ENCODE measurements at regions of chr1 and their contacts with region 1.

Region 1: GRCh38 chr1:27102707-27103491 is 52.0 kb downstream of the SLC9A1 start:
- DNase-seq: peak; percentile 77 to 84
- H3K4me3 ChIP-seq: no peak overlapping the region
- H3K27ac ChIP-seq: no peak overlapping the region
- H3K4me1 ChIP-seq: peaks cover 0 to 28% (median 25%) of the 10 kb centered on the region in 4 donors
- H3K27me3 ChIP-seq: no peaks in the 10 kb centered on the region
- CTCF ChIP-seq: peak; percentile 95 to 99

Region 2: GRCh38 chr1:27031235-27032118 is 71.4 kb before region 1 on chr1:
- intact Hi-C with region 1: no loop called
- DNase-seq: peak; percentile 76 to 95
- H3K4me3 ChIP-seq: peak overlapping the region; percentile 36 to 52
- H3K27ac ChIP-seq: peak overlapping the region; percentile 85 to 86
- H3K4me1 ChIP-seq: peaks cover 0 to 36% (median 30%) of the 10 kb centered on the region in 4 donors
- H3K27me3 ChIP-seq: no peaks in the 10 kb centered on the region
- CTCF ChIP-seq: no peak

Region 3: GRCh38 chr1:27203946-27204345 is 101.0 kb after region 1 on chr1:
- intact Hi-C with region 1: loop called (anchors 2 kb)
- DNase-seq: no peak
- H3K4me3 ChIP-seq: no peak overlapping the region
- H3K27ac ChIP-seq: no peak overlapping the region
- H3K4me1 ChIP-seq: no peaks in the 10 kb centered on the region
- H3K27me3 ChIP-seq: peaks cover 0 to 3% of the 10 kb centered on the region in 2 donors
- CTCF ChIP-seq: no peak

Region 4: GRCh38 chr1:27284425-27285273 is 181.8 kb after region 1 on chr1:
- intact Hi-C with region 1: loop called (anchors 2 kb)
- DNase-seq: peak; percentile 82 to 94
- H3K4me3 ChIP-seq: no peak overlapping the region
- H3K27ac ChIP-seq: no peak overlapping the region
- H3K4me1 ChIP-seq: no peaks in the 10 kb centered on the region
- H3K27me3 ChIP-seq: no peaks in the 10 kb centered on the region
- CTCF ChIP-seq: peak; percentile 73 to 79

Region 5: GRCh38 chr1:27392096-27392777 is 289.3 kb after region 1 on chr1 and contains the start of gene GPR3:
- intact Hi-C with region 1: loop called (anchors 10 kb)
- DNase-seq: peak; percentile 86 to 87
- H3K4me3 ChIP-seq: peak within 1 kb of the TSS; percentile 42 to 53
- H3K27ac ChIP-seq: peak within 1 kb of the TSS; percentile 19 to 26
- H3K4me1 ChIP-seq: peaks cover 0 to 27% (median 19%) of the 10 kb centered on the region in 4 donors
- H3K27me3 ChIP-seq: peaks cover 0 to 10% of the 10 kb centered on the region in 2 donors
- CTCF ChIP-seq: peak; percentile 41 to 54

Measured in tibial artery (tissue), 4 donors.